Psoas muscle (tissue), 8 donors: ENCODE measurements at regions of chr6 and their contacts with region 1.

Region 1: GRCh38 chr6:43386492-43386891 is 17.0 kb upstream of the ZNF318 start:
- DNase-seq: no peak
- ATAC-seq: no peak
- H3K4me3 ChIP-seq: no peak overlapping the region
- H3K27ac ChIP-seq: no peak overlapping the region
- H3K4me1 ChIP-seq: no peaks in the 10 kb centered on the region
- H3K27me3 ChIP-seq: peaks cover 0 to 2% (median 0%) of the 10 kb centered on the region in 3 donors
- CTCF ChIP-seq: peak; percentile 56

Region 2: GRCh38 chr6:43506667-43507471 is 120.4 kb after region 1 on chr6:
- intact Hi-C with region 1: loop called in 1 of 2 experiments (anchors 1 kb)
- DNase-seq: peak; percentile 70 to 82
- ATAC-seq: peak; percentile 71 to 78 (median 77)
- H3K4me3 ChIP-seq: no peak overlapping the region
- H3K27ac ChIP-seq: no peak overlapping the region
- H3K4me1 ChIP-seq: peaks cover 8% of the 10 kb centered on the region
- H3K27me3 ChIP-seq: peaks cover 0 to 9% (median 0%) of the 10 kb centered on the region in 3 donors
- CTCF ChIP-seq: peak; percentile 97

Region 3: GRCh38 chr6:44489910-44490604 is 1103.6 kb after region 1 on chr6:
- intact Hi-C with region 1: no loop called
- DNase-seq: peak in 1 of 2 donors; percentile 32
- ATAC-seq: peak; percentile 84 to 87 (median 85)
- H3K4me3 ChIP-seq: no peak overlapping the region
- H3K27ac ChIP-seq: peak overlapping the region; percentile 59
- H3K4me1 ChIP-seq: no peaks in the 10 kb centered on the region
- H3K27me3 ChIP-seq: no peaks in the 10 kb centered on the region
- CTCF ChIP-seq: no peak